ENCODE measurements at regions of chr5 and their contacts with region 1.

Region 1: GRCh38 chr5:39547553-39548154 is 122.9 kb upstream of the DAB2 start:
- DNase-seq: peak; percentile 26
- CTCF ChIP-seq: peak; percentile 51

Region 2: DNA sequence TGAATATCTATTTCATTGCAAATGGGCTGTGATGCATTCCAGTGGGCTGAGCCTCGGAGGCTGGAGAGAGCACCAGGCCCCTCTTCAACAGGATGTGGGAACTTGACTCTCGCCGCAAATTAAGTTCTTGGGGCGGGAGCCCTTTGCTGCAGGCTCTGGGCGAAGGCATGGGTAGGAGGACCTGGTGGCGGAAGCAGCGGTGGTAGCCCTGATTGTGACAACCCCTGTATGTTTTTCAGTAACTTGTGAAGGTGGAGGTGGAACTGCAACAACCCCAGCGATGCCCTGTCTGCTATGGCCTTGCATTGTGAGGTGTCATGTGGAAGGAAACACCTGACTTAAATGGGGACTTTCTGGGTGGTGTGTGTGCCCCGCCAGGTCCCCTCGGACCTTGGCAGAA is 337.7 kb before region 1 on chr5:
- in situ Hi-C with region 1: no loop called
- DNase-seq: no peak
- CTCF ChIP-seq: no peak

Region 3: DNA sequence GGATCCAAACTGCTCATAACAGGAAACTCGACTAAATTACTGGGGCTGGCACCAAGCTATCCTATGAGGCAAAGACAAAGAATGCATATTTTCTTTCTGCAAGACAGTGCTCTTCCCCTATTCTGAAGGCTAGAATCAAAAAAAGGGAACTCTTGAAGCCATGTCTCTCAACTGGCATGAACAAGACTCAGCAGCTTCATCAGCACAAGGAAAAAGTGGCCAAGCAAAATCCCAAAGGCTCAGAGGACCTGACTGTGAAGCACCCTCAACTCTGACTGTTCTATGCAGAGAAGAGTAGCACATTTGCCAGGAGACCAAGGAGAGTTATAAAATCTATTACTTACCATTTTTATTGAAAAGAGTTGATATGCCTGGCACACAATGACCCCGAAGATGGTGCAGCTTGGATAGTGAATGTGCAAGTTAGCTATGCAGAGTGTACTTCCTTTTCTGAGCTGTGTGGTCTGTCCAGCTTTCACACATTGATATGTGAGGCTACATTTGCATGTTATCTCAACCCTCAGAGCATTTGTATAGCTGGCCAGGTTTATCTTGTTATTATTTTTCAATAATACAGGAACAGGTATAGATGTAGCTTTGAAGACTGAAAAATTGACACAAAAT is 277.3 kb before region 1 on chr5:
- in situ Hi-C with region 1: no loop called
- DNase-seq: peak; percentile 32
- CTCF ChIP-seq: no peak

Region 4: GRCh38 chr5:39376293-39376714 is 171.3 kb before region 1 on chr5:
- in situ Hi-C with region 1: loop called (anchors 25 kb)
- DNase-seq: peak; percentile 40
- CTCF ChIP-seq: peak; percentile 68

Region 5: DNA sequence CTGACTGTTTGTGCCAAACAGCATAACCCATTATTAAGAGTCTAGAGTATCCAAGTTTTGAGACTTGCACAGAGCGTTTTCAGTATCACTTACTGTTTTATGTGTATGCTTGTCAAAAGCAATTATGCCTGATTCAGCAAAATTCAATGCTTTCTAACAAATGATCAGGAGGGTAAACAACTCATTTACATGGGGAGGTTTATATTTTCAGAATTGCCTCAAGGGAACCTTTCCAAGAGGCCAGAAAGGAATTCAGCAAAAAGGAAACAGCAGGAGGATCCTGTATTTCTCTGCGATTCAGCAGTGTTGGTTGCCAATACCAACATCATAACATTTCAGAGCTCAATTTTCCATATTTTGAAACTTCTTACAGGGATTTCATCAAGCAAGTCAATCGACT is 53.6 kb before region 1 on chr5:
- in situ Hi-C with region 1: no loop called
- DNase-seq: no peak
- CTCF ChIP-seq: no peak

Region 6: GRCh38 chr5:39854771-39855410 is 307.2 kb after region 1 on chr5:
- in situ Hi-C with region 1: no loop called
- DNase-seq: no peak
- CTCF ChIP-seq: no peak

Measured in GM13977 (cell line).